CD8-positive, alpha-beta T cell (primary cell): ENCODE measurements at regions of chr7 and their contacts with region 1.

Region 1: DNA sequence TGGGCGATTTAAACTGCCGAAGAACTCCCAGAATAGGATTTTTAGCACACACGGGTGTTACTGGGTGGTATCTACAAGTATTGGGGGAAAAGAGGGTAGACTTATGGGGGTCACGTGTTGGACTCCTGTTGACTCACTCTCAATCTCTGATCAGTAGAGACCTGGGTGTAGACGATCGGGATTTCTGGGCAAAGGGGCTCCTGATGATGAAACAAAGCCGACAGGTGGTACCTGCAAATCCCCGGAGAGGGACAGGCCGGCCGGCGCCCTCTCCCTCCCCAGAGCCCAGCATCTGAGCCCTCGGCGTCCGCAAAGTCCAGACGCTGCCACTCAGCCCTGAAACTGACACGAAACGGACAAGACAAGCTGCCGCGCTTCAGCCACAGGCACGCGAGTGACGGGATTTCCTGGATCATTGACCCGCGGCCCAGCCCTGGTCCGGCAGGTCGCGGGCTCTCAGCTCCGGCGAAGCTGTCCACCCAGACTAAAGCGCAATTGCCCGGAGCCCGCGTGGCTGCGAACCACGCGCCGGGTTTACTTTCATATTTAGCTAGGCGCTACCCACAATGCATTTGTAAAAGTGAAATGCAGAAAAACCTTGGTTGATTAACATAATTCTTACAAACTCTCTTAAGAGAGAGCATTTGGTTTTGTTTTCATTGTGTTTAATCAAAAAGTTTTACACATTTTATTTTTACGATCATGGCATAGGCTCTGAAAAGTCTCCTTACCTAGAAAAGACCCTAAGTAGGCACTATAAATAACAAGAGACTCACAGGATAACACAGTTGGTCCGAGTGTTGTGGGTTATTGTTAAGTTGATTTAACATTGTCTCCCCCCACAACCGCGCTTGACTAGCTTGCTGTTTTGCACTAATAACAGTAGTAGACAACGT is 56.9 kb upstream of the EZH2 start:
- DNase-seq: peak; percentile 31 to 87 (median 66)
- ATAC-seq: peak; percentile 65
- H3K4me3 ChIP-seq: peak overlapping the region; percentile 90 to 96
- H3K4me3 Mint-ChIP-seq: peak overlapping the region; percentile 98
- H3K27ac ChIP-seq: peak overlapping the region; percentile 89 to 91
- H3K27ac Mint-ChIP-seq: peak overlapping the region; percentile 98
- H3K4me1 ChIP-seq: peaks cover 9% of the 10 kb centered on the region
- H3K4me1 Mint-ChIP-seq: peaks cover 17% of the 10 kb centered on the region
- H3K27me3 ChIP-seq: no peaks in the 10 kb centered on the region
- H3K27me3 Mint-ChIP-seq: no peaks in the 10 kb centered on the region
- CTCF ChIP-seq: no peak

Region 2: GRCh38 chr7:148856891-148857290 is 84.1 kb before region 1 on chr7:
- CTCF ChIA-PET with region 1: interaction called, 22 read pairs
- POLR2A ChIA-PET with region 1: no interaction called
- intact Hi-C with region 1: loop called (anchors 1 to 5 kb)
- DNase-seq: peak in 2 of 9 experiments; percentile 34 to 47
- ATAC-seq: no peak
- H3K4me3 ChIP-seq: no peak overlapping the region
- H3K4me3 Mint-ChIP-seq: no peak overlapping the region
- H3K27ac ChIP-seq: no peak overlapping the region
- H3K27ac Mint-ChIP-seq: no peak overlapping the region
- H3K4me1 ChIP-seq: no peaks in the 10 kb centered on the region
- H3K4me1 Mint-ChIP-seq: peaks cover 12% of the 10 kb centered on the region
- H3K27me3 ChIP-seq: no peaks in the 10 kb centered on the region
- H3K27me3 Mint-ChIP-seq: no peaks in the 10 kb centered on the region
- CTCF ChIP-seq: no peak

Region 3: GRCh38 chr7:148987010-148987750 is 46.2 kb after region 1 on chr7:
- CTCF ChIA-PET with region 1: interaction called, 7 read pairs
- POLR2A ChIA-PET with region 1: interaction called, 4 read pairs
- intact Hi-C with region 1: loop called (anchors 1 to 2 kb)
- DNase-seq: peak; percentile 43 to 93 (median 80)
- ATAC-seq: peak; percentile 76
- H3K4me3 ChIP-seq: peak overlapping the region; percentile 82 to 97
- H3K4me3 Mint-ChIP-seq: peak overlapping the region; percentile 96
- H3K27ac ChIP-seq: peak overlapping the region; percentile 74 to 93
- H3K27ac Mint-ChIP-seq: peak overlapping the region; percentile 96
- H3K4me1 ChIP-seq: peaks cover 41% of the 10 kb centered on the region
- H3K4me1 Mint-ChIP-seq: peaks cover 52% of the 10 kb centered on the region
- H3K27me3 ChIP-seq: no peaks in the 10 kb centered on the region
- H3K27me3 Mint-ChIP-seq: no peaks in the 10 kb centered on the region
- CTCF ChIP-seq: no peak

Region 4: GRCh38 chr7:149028346-149029109 is 87.6 kb after region 1 on chr7 and contains the start of gene PDIA4:
- CTCF ChIA-PET with region 1: no interaction called
- POLR2A ChIA-PET with region 1: no interaction called
- intact Hi-C with region 1: loop called in 1 of 2 experiments (anchors 1 kb)
- DNase-seq: peak; percentile 98 to 100 (median 99)
- ATAC-seq: peak; percentile 88
- H3K4me3 ChIP-seq: peak within 1 kb of the TSS; percentile 58 to 78
- H3K4me3 Mint-ChIP-seq: peak within 1 kb of the TSS; percentile 87
- H3K27ac ChIP-seq: peak within 1 kb of the TSS; percentile 62 to 78
- H3K27ac Mint-ChIP-seq: peak within 1 kb of the TSS; percentile 94
- H3K4me1 ChIP-seq: peaks cover 27% of the 10 kb centered on the region
- H3K4me1 Mint-ChIP-seq: peaks cover 49% of the 10 kb centered on the region
- H3K27me3 ChIP-seq: no peaks in the 10 kb centered on the region
- H3K27me3 Mint-ChIP-seq: no peaks in the 10 kb centered on the region
- CTCF ChIP-seq: no peak
- total RNA-seq, gene PDIA4: 12.0 to 14.5 TPM